Gastrocnemius medialis (tissue), 4 donors: ENCODE measurements at regions of chr4 and their contacts with region 1.

Region 1: GRCh38 chr4:75724066-75724866 is at the start of gene USO1:
- DNase-seq: peak; percentile 98 to 99
- ATAC-seq: peak; percentile 66 to 70
- H3K4me3 ChIP-seq: peak within 1 kb of the TSS; percentile 84 to 97 (median 85)
- H3K27ac ChIP-seq: peak within 1 kb of the TSS; percentile 91 to 99 (median 98)
- H3K4me1 ChIP-seq: peaks cover 34 to 37% of the 10 kb centered on the region in 2 donors
- H3K27me3 ChIP-seq: no peaks in the 10 kb centered on the region
- CTCF ChIP-seq: peak; percentile 80 to 93 (median 85)
- POLR2A ChIP-seq: peak; percentile 98
- total RNA-seq, gene USO1: 213 to 328 (median 254) TPM

Region 2: GRCh38 chr4:75653845-75654503 is 70.3 kb before region 1 on chr4:
- in situ Hi-C with region 1: no loop called
- intact Hi-C with region 1: loop called (anchors 2 kb)
- DNase-seq: no peak
- ATAC-seq: peak in 1 of 2 donors; percentile 68
- H3K4me3 ChIP-seq: no peak overlapping the region
- H3K27ac ChIP-seq: peak overlapping the region in 2 of 4 donors; percentile 18 to 24
- H3K4me1 ChIP-seq: no peaks in the 10 kb centered on the region
- H3K27me3 ChIP-seq: no peaks in the 10 kb centered on the region
- CTCF ChIP-seq: peak in 4 of 5 experiments; percentile 22 to 56 (median 46)
- POLR2A ChIP-seq: no peak

Region 3: DNA sequence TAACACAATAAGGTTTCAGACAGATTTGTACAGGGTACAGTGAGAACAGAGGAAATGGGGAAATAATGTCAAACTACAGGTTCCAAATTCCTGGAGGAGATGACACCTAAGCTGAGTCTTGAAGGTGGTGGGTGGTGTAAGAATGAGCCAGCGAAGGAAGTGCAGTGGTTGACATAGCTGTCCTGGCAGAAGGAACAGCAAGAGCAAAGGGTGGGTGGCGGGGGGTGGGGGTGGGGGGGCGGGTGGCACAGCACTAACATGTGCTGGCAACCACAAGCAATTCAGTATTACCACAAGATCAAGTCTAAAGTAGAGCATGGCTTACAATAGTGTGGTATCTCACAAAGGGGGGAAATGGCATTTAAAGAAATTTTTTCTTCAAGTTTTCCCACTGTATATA is 37.9 kb before region 1 on chr4:
- in situ Hi-C with region 1: loop called in 1 of 4 experiments (anchors 5 kb)
- intact Hi-C with region 1: no loop called
- DNase-seq: no peak
- ATAC-seq: peak in 1 of 2 donors; percentile 22
- H3K4me3 ChIP-seq: no peak overlapping the region
- H3K27ac ChIP-seq: peak overlapping the region; percentile 84 to 91 (median 88)
- H3K4me1 ChIP-seq: peaks cover 30 to 38% of the 10 kb centered on the region in 2 donors
- H3K27me3 ChIP-seq: no peaks in the 10 kb centered on the region
- CTCF ChIP-seq: no peak
- POLR2A ChIP-seq: no peak

Region 4: DNA sequence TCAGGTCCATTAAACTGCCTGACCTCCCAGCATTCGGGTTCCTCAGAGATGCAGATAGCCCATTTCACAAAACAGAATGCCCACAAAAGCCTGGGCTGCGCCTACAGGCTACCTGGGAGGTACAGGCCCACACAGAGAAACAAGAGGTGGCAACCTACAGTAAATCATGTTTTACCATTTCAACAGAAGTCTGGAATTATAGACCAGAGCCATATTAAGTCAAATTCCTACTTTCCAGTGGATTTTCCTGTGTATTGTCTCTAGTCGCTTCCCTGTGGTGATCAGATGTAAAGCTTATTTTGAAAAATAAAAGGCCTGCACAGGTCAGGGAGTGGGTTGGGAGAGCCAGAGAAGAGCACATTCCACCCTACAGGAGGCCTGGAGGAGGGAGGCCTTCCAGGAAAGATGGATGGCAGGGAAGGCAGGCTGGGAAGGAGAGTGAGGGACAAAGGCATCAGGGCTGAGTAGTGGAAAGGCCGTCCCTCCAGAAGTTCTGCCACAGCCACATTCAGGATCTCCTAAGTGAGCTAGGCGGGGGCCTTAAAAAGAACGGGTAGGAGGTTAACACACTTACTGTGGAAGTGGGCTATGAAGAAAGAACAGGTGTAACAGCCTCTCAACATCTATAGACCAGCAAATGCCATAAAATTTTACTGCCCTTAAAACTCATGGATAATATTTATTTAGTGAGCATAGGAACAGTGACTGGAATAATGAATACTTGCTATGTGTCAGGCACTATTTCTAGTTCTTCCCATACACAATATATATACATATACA is 18.9 kb before region 1 on chr4:
- in situ Hi-C with region 1: no loop called
- intact Hi-C with region 1: no loop called
- DNase-seq: no peak
- ATAC-seq: no peak
- H3K4me3 ChIP-seq: no peak overlapping the region
- H3K27ac ChIP-seq: peak overlapping the region in 3 of 4 donors; percentile 24 to 36 (median 28)
- H3K4me1 ChIP-seq: peaks cover 0 to 2% of the 10 kb centered on the region in 2 donors
- H3K27me3 ChIP-seq: no peaks in the 10 kb centered on the region
- CTCF ChIP-seq: no peak
- POLR2A ChIP-seq: no peak

Region 5: DNA sequence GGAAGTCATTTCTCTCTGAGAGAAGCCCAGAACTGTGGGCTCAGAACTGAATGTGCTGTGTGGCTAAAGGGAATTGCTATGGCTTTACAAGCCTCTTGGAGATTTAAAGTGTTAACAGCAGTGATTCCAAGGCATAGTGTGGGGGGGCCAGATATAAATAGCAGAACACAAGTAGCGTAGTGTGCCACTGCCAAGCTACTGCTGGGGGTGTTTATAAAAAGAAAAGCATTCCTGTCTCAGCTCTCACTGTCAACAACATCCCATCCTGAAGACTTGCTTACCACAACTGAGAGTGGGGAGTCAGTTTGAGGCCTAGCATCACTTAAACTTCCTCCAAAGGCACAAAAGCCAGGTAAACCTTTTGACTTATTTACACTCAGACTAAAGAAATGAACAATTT is 350.2 kb after region 1 on chr4 and contains the start of gene ART3:
- in situ Hi-C with region 1: no loop called
- intact Hi-C with region 1: loop called (anchors 10 kb)
- DNase-seq: peak; percentile 71 to 77
- ATAC-seq: peak; percentile 76 to 82
- H3K4me3 ChIP-seq: peak within 1 kb of the TSS; percentile 44 to 61 (median 50)
- H3K27ac ChIP-seq: peak within 1 kb of the TSS; percentile 80 to 93 (median 84)
- H3K4me1 ChIP-seq: peaks cover 29 to 36% of the 10 kb centered on the region in 2 donors
- H3K27me3 ChIP-seq: no peaks in the 10 kb centered on the region
- CTCF ChIP-seq: no peak
- POLR2A ChIP-seq: peak; percentile 28 to 90
- total RNA-seq, gene ART3: 55.2 to 91.0 (median 83.4) TPM